Dendritic cell treated with granulocyte-macrophage colony-stimulating factor and Interleukin-4, amounts not matched to agents 40 ng/mL and 50 ng/mL, for 4 days (primary cell): ENCODE measurements at regions of chr12 and their contacts with region 1.

Region 1: GRCh38 chr12:31682136-31682962 is 22.9 kb downstream of the ETFBKMT start:
- H3K4me3 Mint-ChIP-seq: no peak overlapping the region
- H3K27ac Mint-ChIP-seq: peak overlapping the region; percentile 70
- H3K4me1 Mint-ChIP-seq: peaks cover 23% of the 10 kb centered on the region
- H3K27me3 Mint-ChIP-seq: no peaks in the 10 kb centered on the region

Region 2: GRCh38 chr12:31728917-31729640 is 46.7 kb after region 1 on chr12 and contains the start of gene AMN1:
- intact Hi-C with region 1: loop called (anchors 2 kb)
- H3K4me3 Mint-ChIP-seq: peak within 1 kb of the TSS; percentile 80
- H3K27ac Mint-ChIP-seq: peak within 1 kb of the TSS; percentile 88
- H3K4me1 Mint-ChIP-seq: peaks cover 77% of the 10 kb centered on the region
- H3K27me3 Mint-ChIP-seq: no peaks in the 10 kb centered on the region

Region 3: GRCh38 chr12:31832740-31833729 is 150.7 kb after region 1 on chr12:
- intact Hi-C with region 1: loop called (anchors 10 kb)
- H3K4me3 Mint-ChIP-seq: no peak overlapping the region
- H3K27ac Mint-ChIP-seq: peak overlapping the region; percentile 88
- H3K4me1 Mint-ChIP-seq: peaks cover 22% of the 10 kb centered on the region
- H3K27me3 Mint-ChIP-seq: no peaks in the 10 kb centered on the region

Region 4: DNA sequence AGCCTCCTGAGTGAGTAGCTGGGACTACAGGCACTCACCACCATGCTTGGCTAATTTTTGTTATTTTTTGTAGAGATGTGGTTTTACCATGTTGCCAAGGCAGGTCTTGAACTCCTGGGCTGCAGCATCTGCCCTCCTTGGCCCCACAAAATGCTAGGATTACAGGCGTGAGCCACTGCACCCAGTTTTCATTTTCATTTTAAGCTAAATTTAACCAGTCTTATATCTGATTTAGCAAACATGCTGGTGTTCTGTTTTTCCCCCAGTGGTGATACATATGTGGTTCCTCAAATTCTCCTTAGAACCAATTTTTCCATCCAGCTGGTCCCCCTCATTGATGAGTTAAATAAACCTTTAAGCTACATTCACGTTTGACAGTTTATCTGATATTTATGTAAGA is 380.5 kb after region 1 on chr12:
- intact Hi-C with region 1: loop called (anchors 5 kb)
- H3K4me3 Mint-ChIP-seq: no peak overlapping the region
- H3K27ac Mint-ChIP-seq: no peak overlapping the region
- H3K4me1 Mint-ChIP-seq: peaks cover 11% of the 10 kb centered on the region
- H3K27me3 Mint-ChIP-seq: peaks cover 2% of the 10 kb centered on the region

Region 5: DNA sequence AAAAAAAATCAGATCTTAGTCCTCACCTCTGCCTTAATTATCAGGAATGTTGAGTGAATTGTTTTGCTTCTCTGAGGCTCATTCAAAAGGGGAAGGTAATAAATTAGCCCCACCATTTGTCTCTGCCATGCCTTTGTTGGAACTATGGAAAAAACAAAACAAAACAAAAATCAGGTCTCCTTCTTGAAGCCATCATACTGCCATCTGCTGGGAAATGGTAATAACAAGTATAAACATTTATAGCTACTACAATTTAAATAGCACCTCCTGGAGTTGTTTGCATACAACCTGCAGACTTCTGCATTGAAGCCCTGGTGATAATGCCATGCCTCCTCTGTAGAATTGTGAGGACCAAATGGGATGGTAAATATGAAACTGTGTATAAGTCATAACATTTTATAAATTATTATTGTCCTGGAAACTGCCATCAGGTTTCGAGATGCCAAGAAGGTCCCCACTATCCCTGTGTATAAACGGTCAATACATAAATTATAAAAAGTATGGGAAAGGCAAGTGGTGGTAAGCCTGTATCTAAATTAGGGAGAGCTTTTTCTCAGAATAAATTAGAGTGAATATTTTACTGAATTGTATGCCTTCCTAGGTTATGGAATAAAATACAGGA is 629.8 kb after region 1 on chr12:
- intact Hi-C with region 1: loop called (anchors 5 kb)
- H3K4me3 Mint-ChIP-seq: no peak overlapping the region
- H3K27ac Mint-ChIP-seq: peak overlapping the region; percentile 22
- H3K4me1 Mint-ChIP-seq: no peaks in the 10 kb centered on the region
- H3K27me3 Mint-ChIP-seq: no peaks in the 10 kb centered on the region